ENCODE measurements at regions of chr5 and their contacts with region 1.

Region 1: GRCh38 chr5:152142840-152143469 is 218.3 kb upstream of the GLRA1 start:
- DNase-seq: peak; percentile 39
- ATAC-seq: peak; percentile 90
- H3K4me3 ChIP-seq: no peak overlapping the region
- H3K27ac ChIP-seq: no peak overlapping the region
- H3K4me1 ChIP-seq: no peaks in the 10 kb centered on the region
- H3K27me3 ChIP-seq: no peaks in the 10 kb centered on the region
- CTCF ChIP-seq: peak; percentile 92

Region 2: DNA sequence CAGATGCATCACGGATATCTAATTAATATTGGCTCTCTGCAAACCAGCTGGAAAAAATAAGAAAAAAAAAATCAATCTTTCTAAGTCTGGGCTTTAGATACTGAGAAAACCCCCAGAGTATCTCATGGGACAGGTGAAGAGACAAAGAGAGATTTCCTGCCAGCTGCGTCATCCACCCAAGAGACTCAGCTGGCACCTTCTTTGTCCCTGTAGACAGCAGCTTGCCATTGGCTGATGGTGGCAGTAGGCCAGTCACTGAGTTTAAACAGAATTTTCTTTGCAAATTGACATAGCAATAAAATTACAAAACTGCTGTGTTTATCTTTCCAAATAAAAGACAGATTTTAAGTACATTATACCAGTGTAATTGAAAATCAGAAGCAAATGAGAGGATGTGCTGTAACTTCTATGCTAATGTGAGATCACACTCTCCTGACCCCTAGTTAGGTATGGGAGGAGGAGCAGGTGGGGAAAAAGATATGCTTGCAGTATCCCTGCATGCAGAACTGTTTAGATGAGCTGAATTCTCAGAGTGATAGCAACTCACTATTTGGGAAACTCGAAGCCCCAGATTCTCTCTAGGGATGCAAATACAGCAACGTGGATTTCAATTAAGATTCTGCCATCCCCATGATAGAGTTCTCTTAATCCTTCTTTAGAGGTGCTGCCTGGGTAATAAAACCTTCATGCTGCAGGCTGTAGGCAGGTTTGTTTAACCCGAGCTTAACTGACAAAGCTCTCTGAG is 189.9 kb after region 1 on chr5:
- CTCF ChIA-PET with region 1: no interaction called
- POLR2A ChIA-PET with region 1: no interaction called
- in situ Hi-C with region 1: no loop called
- intact Hi-C with region 1: no loop called
- DNase-seq: no peak
- ATAC-seq: no peak
- H3K4me3 ChIP-seq: no peak overlapping the region
- H3K27ac ChIP-seq: no peak overlapping the region
- H3K4me1 ChIP-seq: no peaks in the 10 kb centered on the region
- H3K27me3 ChIP-seq: no peaks in the 10 kb centered on the region
- CTCF ChIP-seq: no peak

Region 3: GRCh38 chr5:152505442-152506042 is 362.6 kb after region 1 on chr5:
- CTCF ChIA-PET with region 1: no interaction called
- POLR2A ChIA-PET with region 1: no interaction called
- in situ Hi-C with region 1: no loop called
- intact Hi-C with region 1: loop called (anchors 5 kb)
- DNase-seq: peak; percentile 25
- ATAC-seq: peak; percentile 93
- H3K4me3 ChIP-seq: no peak overlapping the region
- H3K27ac ChIP-seq: no peak overlapping the region
- H3K4me1 ChIP-seq: no peaks in the 10 kb centered on the region
- H3K27me3 ChIP-seq: no peaks in the 10 kb centered on the region
- CTCF ChIP-seq: peak; percentile 76

Measured in Panc1 (cell line).